ENCODE measurements at regions of chr6 and their contacts with region 1.

Region 1: DNA sequence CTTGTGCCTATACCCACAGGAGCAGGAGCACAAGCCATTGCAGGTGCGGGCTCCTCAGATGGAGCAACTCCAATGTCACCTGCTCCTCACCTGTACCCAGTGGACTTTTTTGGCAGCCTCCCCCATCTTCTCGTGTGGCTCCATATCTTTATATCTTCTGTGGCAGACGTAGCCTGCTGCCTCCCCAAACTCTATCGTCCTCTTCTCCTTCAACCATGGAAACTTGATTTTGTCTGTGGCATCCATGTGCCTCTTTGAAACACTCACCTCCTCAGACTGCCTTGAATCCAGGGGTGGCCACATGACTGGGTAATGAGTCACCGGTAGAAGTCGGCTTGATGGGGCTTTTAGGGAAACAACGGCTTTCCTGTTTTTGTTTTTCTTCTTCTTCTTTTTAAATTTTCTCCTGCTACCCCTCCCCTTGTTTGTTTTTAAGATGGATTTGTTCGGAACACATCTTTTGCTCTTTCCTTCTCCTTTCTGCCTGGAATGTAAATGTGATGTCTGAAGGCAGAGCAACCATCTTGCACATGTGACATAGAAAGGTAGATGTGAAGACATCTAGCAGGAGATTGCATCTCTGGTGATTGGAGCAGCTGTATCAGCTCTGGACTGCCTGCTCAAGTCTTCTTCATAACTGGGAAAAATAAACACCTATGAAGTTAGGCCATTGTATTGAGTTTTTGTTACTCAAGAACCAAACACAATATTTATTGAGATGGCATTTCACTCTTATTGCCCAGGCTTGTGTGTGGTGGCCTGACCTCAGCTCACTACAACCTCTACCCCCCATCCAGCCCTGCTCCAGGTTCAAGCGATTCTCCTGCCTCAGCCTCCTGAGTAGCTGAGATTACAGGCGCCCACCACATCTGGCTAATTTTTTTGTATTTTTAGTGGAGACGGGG is 69.9 kb upstream of the DDR1 start:
- DNase-seq: no peak
- H3K4me3 Mint-ChIP-seq: peak overlapping the region; percentile 46
- H3K27ac Mint-ChIP-seq: peak overlapping the region; percentile 96
- H3K4me1 Mint-ChIP-seq: peaks cover 72% of the 10 kb centered on the region
- H3K27me3 Mint-ChIP-seq: no peaks in the 10 kb centered on the region

Region 2: GRCh38 chr6:30664994-30665767 is 149.2 kb before region 1 on chr6:
- intact Hi-C with region 1: no loop called
- DNase-seq: no peak
- H3K4me3 Mint-ChIP-seq: no peak overlapping the region
- H3K27ac Mint-ChIP-seq: no peak overlapping the region
- H3K4me1 Mint-ChIP-seq: peaks cover 5% of the 10 kb centered on the region
- H3K27me3 Mint-ChIP-seq: no peaks in the 10 kb centered on the region

Region 3: GRCh38 chr6:30678964-30679726 is 135.2 kb before region 1 on chr6:
- intact Hi-C with region 1: loop called (anchors 5 kb)
- DNase-seq: peak; percentile 86
- H3K4me3 Mint-ChIP-seq: peak overlapping the region; percentile 97
- H3K27ac Mint-ChIP-seq: peak overlapping the region; percentile 75
- H3K4me1 Mint-ChIP-seq: peaks cover 26% of the 10 kb centered on the region
- H3K27me3 Mint-ChIP-seq: no peaks in the 10 kb centered on the region

Region 4: GRCh38 chr6:30742316-30743098 is 71.9 kb before region 1 on chr6 and contains the start of gene FLOT1:
- intact Hi-C with region 1: loop called (anchors 1 kb)
- DNase-seq: peak; percentile 88
- H3K4me3 Mint-ChIP-seq: peak within 1 kb of the TSS; percentile 99
- H3K27ac Mint-ChIP-seq: peak within 1 kb of the TSS; percentile 91
- H3K4me1 Mint-ChIP-seq: peaks cover 50% of the 10 kb centered on the region
- H3K27me3 Mint-ChIP-seq: no peaks in the 10 kb centered on the region
- total RNA-seq, gene FLOT1: 201 and 214 TPM in 2 replicates

Region 5: DNA sequence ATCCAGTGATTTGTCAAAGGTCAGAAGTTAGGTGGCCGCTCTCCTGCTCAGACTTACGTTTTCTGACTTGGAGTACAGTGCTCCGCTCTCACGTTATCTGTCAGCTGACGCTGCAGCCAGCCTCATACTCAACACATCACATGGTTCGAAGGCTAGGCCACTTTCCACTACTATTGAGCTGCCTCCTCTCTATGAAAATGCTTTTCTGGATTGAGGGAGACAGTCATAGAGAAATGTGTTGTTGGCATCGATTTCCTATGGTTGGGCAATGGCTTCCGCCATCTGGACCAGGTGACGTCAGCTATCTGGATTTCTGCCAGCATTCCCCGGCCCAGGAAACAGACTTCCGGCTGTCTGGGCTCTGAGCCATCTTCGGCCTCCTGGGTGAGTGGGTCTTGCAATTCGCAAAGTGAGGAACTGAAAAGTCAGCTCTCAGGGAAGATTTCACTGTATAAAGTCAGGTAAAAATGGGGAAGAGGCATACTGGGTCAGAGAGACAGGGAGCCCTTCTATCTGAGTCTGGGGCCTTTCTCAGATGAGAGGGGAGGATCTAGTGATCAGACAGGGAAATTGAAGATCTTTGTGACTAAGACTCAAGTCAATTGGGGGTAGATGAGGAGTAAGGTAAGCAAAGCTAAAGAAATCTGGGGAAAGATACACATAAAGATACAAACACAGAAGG is 32.5 kb before region 1 on chr6:
- intact Hi-C with region 1: loop called (anchors 1 kb)
- DNase-seq: no peak
- H3K4me3 Mint-ChIP-seq: peak overlapping the region; percentile 55
- H3K27ac Mint-ChIP-seq: peak overlapping the region; percentile 65
- H3K4me1 Mint-ChIP-seq: peaks cover 62% of the 10 kb centered on the region
- H3K27me3 Mint-ChIP-seq: no peaks in the 10 kb centered on the region

Region 6: GRCh38 chr6:30793521-30794194 is 20.7 kb before region 1 on chr6:
- intact Hi-C with region 1: loop called (anchors 1 kb)
- DNase-seq: no peak
- H3K4me3 Mint-ChIP-seq: peak overlapping the region; percentile 39
- H3K27ac Mint-ChIP-seq: peak overlapping the region; percentile 86
- H3K4me1 Mint-ChIP-seq: peaks cover 51% of the 10 kb centered on the region
- H3K27me3 Mint-ChIP-seq: no peaks in the 10 kb centered on the region

Region 7: DNA sequence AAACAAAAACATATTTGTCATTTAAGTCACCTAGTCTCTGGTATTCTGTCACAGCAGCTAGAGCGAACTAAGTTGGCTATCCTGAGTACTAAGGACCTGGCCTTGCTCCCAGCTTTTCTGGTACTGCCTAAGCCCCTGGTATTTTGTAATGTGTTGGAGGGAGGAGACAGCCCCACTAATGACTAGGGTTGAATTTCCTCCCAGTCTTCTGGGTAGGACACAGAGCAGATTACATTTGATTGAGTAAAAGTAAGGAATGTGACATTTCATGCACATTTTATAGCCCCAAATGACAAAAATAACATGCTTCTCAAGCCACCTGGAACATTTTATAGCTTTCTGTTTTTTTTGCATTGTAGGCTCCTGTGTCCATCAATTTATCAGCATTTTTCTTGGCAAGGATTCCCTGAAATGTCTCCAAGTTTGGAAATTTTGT is 22.1 kb after region 1 on chr6:
- intact Hi-C with region 1: no loop called
- DNase-seq: no peak
- H3K4me3 Mint-ChIP-seq: no peak overlapping the region
- H3K27ac Mint-ChIP-seq: no peak overlapping the region
- H3K4me1 Mint-ChIP-seq: peaks cover 22% of the 10 kb centered on the region
- H3K27me3 Mint-ChIP-seq: no peaks in the 10 kb centered on the region